Right cardiac atrium (tissue), 5 donors: ENCODE measurements at regions of chr4 and their contacts with region 1.

Region 1: GRCh38 chr4:143025081-143025704 is 159.5 kb upstream of the USP38 start:
- DNase-seq: no peak
- ATAC-seq: no peak
- H3K4me3 ChIP-seq: no peak overlapping the region
- H3K27ac ChIP-seq: no peak overlapping the region
- H3K4me1 ChIP-seq: peaks cover 5% of the 10 kb centered on the region
- H3K27me3 ChIP-seq: no peaks in the 10 kb centered on the region

Region 2: GRCh38 chr4:142883040-142883832 is 142.0 kb before region 1 on chr4:
- intact Hi-C with region 1: loop called in 1 of 4 experiments (anchors 5 kb)
- DNase-seq: no peak
- ATAC-seq: no peak
- H3K4me3 ChIP-seq: no peak overlapping the region
- H3K27ac ChIP-seq: no peak overlapping the region
- H3K4me1 ChIP-seq: no peaks in the 10 kb centered on the region
- H3K27me3 ChIP-seq: no peaks in the 10 kb centered on the region

Region 3: GRCh38 chr4:143524211-143524610 is 499.0 kb after region 1 on chr4:
- intact Hi-C with region 1: no loop called
- DNase-seq: no peak
- ATAC-seq: no peak
- H3K4me3 ChIP-seq: no peak overlapping the region
- H3K27ac ChIP-seq: no peak overlapping the region
- H3K4me1 ChIP-seq: no peaks in the 10 kb centered on the region
- H3K27me3 ChIP-seq: no peaks in the 10 kb centered on the region